ENCODE measurements at regions of chr4 and their contacts with region 1.

Region 1: DNA sequence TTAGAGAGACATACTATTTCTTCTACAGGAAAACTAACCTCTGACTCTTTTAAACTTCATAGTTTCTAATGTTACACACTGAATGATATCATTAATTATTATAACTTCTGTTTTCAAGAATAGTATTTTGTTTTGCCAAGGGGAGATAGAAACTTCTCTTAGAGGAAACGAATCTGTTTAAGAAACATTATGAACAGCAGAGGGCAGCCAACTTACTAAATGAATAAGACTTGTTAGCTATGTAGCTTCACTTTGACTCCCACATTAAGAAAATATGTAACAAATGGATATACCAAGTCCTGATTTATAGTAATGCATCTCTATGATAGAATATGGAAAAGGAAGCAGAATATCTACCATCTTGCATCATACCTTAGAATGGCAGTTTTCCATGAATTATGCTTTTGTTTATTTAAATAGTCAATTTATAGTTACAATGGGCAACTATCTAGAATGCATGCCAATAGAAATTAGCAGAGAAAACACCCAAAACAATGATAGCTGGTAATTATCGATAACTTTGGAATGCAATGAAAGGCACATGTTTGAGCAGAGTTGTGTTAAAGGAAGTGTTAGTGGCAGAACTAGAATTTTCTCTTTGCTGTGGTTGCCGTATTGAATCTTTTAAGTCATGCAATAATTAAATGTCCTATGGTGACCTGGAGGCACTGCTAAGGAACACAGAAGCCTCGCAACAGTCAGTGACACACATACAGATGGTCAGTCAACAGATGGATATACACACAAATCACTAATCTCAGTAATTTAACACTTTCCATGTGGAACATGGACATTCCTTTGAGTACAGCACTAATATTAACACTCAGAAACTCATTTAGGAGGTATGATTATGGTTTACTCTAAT is 105.7 kb upstream of the PDLIM3 start:
- DNase-seq: no peak

Region 2: GRCh38 chr4:186021461-186022167 is 380.6 kb after region 1 on chr4:
- intact Hi-C with region 1: loop called (anchors 5 kb)
- DNase-seq: no peak

Region 3: DNA sequence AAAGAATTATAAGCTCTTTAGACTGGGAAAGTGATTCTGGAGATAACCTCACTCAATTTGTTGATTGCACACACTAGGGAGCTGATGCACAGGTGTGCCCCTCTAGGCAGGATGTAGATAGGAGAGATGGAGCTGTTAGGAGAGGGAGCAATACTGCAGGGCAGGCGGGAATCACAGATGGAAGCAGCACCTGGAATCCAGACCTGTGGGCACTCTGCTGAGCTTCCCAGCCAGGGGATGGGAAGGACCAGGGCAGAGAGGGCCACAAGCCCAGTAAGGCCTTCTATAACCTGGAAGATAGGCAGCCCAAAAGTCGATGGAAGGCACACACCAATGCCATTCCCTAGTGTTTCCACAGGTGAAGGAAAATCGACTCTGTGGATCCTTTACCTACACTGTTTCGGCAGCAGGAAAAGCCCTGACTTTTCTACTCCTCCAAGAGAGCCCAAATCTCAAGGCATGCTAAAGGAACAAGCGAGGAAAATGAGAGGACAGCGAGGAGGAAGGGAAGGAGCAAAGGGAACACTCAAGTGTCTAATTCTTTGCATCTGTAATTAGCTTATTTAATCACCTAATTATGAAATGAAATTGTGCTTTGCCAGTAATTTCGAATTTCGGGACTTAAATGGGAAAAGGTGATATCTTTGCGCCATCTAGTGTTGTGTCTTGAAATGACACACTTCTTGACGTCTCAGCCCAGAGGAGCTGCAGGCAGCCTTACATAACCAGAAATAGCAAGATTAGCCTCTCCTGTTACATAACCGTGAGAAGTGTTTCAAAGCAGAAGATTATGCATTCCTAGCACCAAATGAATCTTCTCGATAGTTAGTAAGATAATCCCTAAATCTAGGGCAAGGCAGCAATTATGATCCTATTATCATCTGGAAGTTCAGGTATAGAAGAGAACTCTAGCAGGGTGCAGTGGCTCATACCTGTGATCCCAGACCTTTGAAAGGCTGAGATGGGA is 396.9 kb after region 1 on chr4:
- intact Hi-C with region 1: loop called in 1 of 2 experiments (anchors 5 kb)
- DNase-seq: no peak